SK-N-SH (cell line): ENCODE measurements at regions of chr3 and their contacts with region 1.

Region 1: DNA sequence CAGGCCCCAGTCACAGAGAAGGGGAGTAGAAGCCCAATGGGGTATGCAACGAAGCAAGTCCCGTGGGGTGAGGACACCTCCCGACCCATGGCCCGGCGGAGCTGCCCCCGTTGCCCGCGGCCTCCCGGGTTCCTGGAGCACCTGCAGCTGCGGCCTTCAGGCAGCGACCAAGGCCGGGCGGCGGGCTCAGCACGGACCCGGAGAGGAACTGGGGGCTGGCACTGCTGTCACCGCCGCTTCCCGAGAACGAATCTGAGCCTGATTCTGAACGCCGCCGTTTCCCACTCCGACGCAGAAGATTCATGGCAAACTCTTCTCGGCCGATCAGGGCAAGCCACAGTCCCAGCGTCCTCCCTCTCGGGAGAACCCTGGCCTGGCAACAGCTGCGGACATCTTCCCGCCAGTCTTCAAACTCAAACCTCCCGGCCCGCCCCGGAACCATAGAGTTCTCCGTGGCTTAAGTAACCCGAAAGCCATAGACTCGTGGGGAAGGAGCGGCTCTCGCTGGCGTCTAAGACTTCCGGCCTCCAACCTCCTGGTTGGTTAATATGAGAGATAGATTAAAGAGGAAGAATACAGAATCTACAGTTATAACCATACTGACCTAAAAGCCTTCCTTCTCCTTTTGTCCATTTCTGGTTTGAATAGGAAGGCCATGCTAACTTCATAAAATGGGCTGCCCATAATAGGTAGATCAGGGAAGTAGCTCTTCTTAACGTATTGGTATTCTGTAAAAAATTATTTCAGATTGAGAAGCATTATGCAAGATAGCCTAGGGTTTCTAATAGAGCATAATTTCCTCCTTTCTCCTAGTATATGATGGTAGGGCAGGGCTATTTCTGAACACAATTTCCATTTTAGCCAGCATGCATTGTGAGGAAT is at the start of gene POLQ:
- DNase-seq: peak; percentile 92
- H3K4me3 ChIP-seq: peak within 1 kb of the TSS; percentile 73 to 90
- H3K27ac ChIP-seq: peak within 1 kb of the TSS; percentile 55 to 78
- H3K4me1 ChIP-seq: peaks cover 0 to 6% of the 10 kb centered on the region in 2 experiments; a peak in 2 of 4 replicates
- H3K27me3 ChIP-seq: no peaks in the 10 kb centered on the region
- CTCF ChIP-seq: no peak
- EP300 ChIP-seq: no peak
- RAD21 ChIP-seq: no peak
- polyA plus RNA-seq, gene POLQ: 1.4 and 2.6 TPM in 2 replicates

Region 2: GRCh38 chr3:121562158-121562557 is 16.3 kb after region 1 on chr3:
- CTCF ChIA-PET with region 1: interaction called, 16 read pairs
- POLR2A ChIA-PET with region 1: no interaction called
- DNase-seq: no peak
- H3K4me3 ChIP-seq: no peak overlapping the region
- H3K27ac ChIP-seq: no peak overlapping the region
- H3K4me1 ChIP-seq: no peaks in the 10 kb centered on the region
- H3K27me3 ChIP-seq: no peaks in the 10 kb centered on the region
- CTCF ChIP-seq: no peak
- EP300 ChIP-seq: no peak
- RAD21 ChIP-seq: no peak

Region 3: GRCh38 chr3:121619691-121620090 is 73.9 kb after region 1 on chr3:
- CTCF ChIA-PET with region 1: no interaction called
- POLR2A ChIA-PET with region 1: no interaction called
- DNase-seq: peak; percentile 52
- H3K4me3 ChIP-seq: no peak overlapping the region
- H3K27ac ChIP-seq: no peak overlapping the region
- H3K4me1 ChIP-seq: peaks cover 0 to 5% of the 10 kb centered on the region in 2 experiments; a peak in 1 of 4 replicates
- H3K27me3 ChIP-seq: no peaks in the 10 kb centered on the region
- CTCF ChIP-seq: no peak
- EP300 ChIP-seq: no peak
- RAD21 ChIP-seq: no peak

Region 4: DNA sequence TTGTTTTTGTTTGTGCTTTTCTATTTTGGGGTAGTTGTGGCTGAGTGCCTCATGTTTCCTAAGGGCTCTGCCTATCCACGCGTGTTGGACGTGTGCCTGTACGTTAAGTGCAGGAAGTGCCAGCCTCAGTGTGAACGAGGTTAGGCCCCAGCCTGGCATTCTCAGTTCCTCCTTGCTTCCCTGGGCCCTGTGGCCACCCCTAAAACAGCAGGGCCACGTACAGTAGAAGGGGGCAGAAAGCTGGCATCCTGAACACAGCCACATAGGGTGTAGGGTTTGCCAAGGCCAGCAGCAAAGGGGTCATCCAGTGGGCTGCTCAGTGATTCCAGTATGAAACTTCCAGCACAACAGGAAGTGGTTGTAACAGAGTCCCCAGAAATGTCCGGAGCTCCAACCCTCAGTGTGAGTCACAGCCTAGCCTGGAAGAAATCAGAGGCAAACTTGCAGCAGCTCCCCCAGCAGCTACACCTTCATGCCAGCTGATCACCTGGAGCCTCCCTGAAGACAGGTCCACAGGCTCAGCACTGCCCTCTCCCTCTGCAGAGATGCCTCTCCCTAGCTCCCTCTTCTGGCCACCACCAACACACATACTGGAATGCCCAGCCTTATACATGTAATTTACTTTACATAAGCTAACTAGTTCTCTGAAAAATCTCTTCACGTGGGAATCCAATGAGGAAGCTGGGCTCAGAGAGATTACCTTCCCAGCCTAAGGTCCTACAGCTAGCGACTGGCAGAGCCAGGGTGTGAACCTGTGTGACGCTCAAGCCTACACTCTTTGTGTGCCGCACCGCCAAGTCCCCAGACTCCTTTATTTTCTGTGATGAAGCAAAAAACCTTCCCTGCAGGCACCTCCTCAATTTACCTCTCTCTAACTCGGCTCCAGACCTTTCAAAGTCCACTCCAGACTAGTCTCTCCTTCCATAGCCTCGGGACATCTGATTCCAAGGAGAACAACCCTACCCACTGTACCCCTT is 449.6 kb after region 1 on chr3:
- CTCF ChIA-PET with region 1: interaction called, 16 read pairs
- POLR2A ChIA-PET with region 1: no interaction called
- DNase-seq: peak; percentile 61
- H3K4me3 ChIP-seq: peak overlapping the region in 1 of 2 experiments; percentile 4; a peak in 1 of 4 replicates
- H3K27ac ChIP-seq: 0 out of 4 replicates have a peak overlapping the region, but pooled peaks of 1 of the 2 experiments have one; percentile 10
- H3K4me1 ChIP-seq: peaks cover 0 to 8% of the 10 kb centered on the region in 2 experiments; a peak in 1 of 4 replicates
- H3K27me3 ChIP-seq: no peaks in the 10 kb centered on the region
- CTCF ChIP-seq: peak; percentile 56
- EP300 ChIP-seq: peak in 1 of 2 experiments; percentile 14; a peak in 1 of 4 replicates
- RAD21 ChIP-seq: peak; percentile 59

Region 5: GRCh38 chr3:122258757-122259371 is 713.0 kb after region 1 on chr3:
- CTCF ChIA-PET with region 1: interaction called, 28 read pairs
- POLR2A ChIA-PET with region 1: no interaction called
- DNase-seq: peak; percentile 66
- H3K4me3 ChIP-seq: no peak overlapping the region; a peak in 1 of 4 replicates
- H3K27ac ChIP-seq: no peak overlapping the region
- H3K4me1 ChIP-seq: no peaks in the 10 kb centered on the region
- H3K27me3 ChIP-seq: peaks cover 27% of the 10 kb centered on the region; the same call in 1 of the 2 replicates
- CTCF ChIP-seq: peak; percentile 64
- EP300 ChIP-seq: no peak
- RAD21 ChIP-seq: peak; percentile 83